Right lobe of liver (tissue), 6 donors: ENCODE measurements at regions of chr16 and their contacts with region 1.

Region 1: GRCh38 chr16:77675464-77676324 is 46.6 kb upstream of the NUDT7 start:
- DNase-seq: peak in 2 of 3 donors; percentile 41 to 72
- ATAC-seq: peak; percentile 99 to 100 (median 99)
- H3K4me3 ChIP-seq: no peak overlapping the region
- H3K27ac ChIP-seq: no peak overlapping the region
- H3K4me1 ChIP-seq: no peaks in the 10 kb centered on the region
- H3K27me3 ChIP-seq: no peaks in the 10 kb centered on the region
- CTCF ChIP-seq: peak; percentile 81 to 97 (median 82)
- POLR2A ChIP-seq: no peak

Region 2: DNA sequence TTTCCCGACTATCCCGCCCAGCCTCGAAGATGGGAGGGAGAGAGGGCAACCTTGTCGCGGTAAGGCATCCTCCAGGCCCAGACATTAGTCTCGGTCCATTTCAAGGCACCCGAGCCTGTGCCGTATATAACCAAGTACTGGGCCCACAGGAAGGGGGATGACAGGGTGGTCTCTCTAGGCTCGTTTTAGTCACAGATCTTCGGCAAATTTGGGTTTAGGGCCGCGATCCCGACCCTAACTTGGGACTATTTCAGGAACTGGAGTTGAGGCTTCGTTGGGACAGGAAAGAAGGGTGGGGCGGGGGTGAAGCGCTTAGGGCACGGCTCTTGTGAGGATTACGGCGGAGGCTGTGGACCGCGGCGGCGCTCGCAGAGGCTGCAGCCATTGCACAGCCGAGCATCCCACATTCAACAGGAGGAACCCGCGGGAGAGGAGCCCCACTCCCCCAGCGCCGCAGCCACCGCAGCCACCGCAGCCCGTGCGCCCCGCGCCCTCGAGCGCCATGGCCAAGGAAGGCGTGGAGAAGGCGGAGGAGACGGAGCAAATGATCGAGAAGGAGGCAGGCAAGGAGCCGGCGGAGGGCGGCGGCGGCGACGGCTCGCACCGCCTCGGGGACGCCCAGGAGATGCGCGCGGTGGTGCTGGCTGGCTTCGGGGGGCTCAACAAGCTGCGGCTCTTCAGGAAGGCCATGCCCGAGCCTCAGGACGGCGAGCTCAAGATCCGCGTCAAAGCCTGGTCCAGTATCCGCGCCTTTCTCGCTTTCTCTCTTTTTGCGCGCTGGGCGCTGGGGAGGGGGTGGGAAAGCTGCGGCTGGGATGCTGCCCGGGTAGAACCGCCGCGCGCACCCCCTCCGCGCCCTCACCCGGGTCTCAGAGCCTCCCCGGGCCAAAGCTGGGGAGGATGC is 112.7 kb after region 1 on chr16 and contains the start of gene VAT1L:
- intact Hi-C with region 1: loop called in 1 of 2 experiments (anchors 10 kb)
- DNase-seq: peak in 1 of 3 donors; percentile 33
- ATAC-seq: peak; percentile 64 to 83 (median 76)
- H3K4me3 ChIP-seq: peak within 1 kb of the TSS; percentile 23 to 51 (median 37)
- H3K27ac ChIP-seq: no peak within 1 kb of the TSS
- H3K4me1 ChIP-seq: peaks cover 0 to 10% (median 0%) of the 10 kb centered on the region in 4 donors
- H3K27me3 ChIP-seq: peaks cover 0 to 20% of the 10 kb centered on the region in 2 donors
- CTCF ChIP-seq: no peak
- POLR2A ChIP-seq: no peak
- total RNA-seq, gene VAT1L: 0.19 to 0.64 (median 0.51) TPM in 5 of 6 experiments, not detected in the other

Region 3: GRCh38 chr16:77971306-77972271 is 295.9 kb after region 1 on chr16:
- intact Hi-C with region 1: loop called (anchors 5 kb)
- DNase-seq: peak; percentile 79 to 84 (median 81)
- ATAC-seq: peak; percentile 92 to 94 (median 93)
- H3K4me3 ChIP-seq: no peak overlapping the region
- H3K27ac ChIP-seq: no peak overlapping the region
- H3K4me1 ChIP-seq: no peaks in the 10 kb centered on the region
- H3K27me3 ChIP-seq: no peaks in the 10 kb centered on the region
- CTCF ChIP-seq: peak; percentile 68 to 80 (median 76)
- POLR2A ChIP-seq: no peak